GM10248 (cell line): ENCODE measurements at regions of chr13 and their contacts with region 1.

Region 1: GRCh38 chr13:27953676-27954405 is 15.3 kb downstream of the CDX2 start:
- DNase-seq: peak; percentile 89
- CTCF ChIP-seq: peak; percentile 97

Region 2: GRCh38 chr13:27556109-27556508 is 397.7 kb before region 1 on chr13:
- CTCF ChIA-PET with region 1: no interaction called
- POLR2A ChIA-PET with region 1: no interaction called
- DNase-seq: no peak
- CTCF ChIP-seq: peak; percentile 17

Region 3: GRCh38 chr13:27839809-27840467 is 113.9 kb before region 1 on chr13:
- CTCF ChIA-PET with region 1: interaction called, 10 read pairs
- POLR2A ChIA-PET with region 1: no interaction called
- DNase-seq: no peak
- CTCF ChIP-seq: no peak

Region 4: DNA sequence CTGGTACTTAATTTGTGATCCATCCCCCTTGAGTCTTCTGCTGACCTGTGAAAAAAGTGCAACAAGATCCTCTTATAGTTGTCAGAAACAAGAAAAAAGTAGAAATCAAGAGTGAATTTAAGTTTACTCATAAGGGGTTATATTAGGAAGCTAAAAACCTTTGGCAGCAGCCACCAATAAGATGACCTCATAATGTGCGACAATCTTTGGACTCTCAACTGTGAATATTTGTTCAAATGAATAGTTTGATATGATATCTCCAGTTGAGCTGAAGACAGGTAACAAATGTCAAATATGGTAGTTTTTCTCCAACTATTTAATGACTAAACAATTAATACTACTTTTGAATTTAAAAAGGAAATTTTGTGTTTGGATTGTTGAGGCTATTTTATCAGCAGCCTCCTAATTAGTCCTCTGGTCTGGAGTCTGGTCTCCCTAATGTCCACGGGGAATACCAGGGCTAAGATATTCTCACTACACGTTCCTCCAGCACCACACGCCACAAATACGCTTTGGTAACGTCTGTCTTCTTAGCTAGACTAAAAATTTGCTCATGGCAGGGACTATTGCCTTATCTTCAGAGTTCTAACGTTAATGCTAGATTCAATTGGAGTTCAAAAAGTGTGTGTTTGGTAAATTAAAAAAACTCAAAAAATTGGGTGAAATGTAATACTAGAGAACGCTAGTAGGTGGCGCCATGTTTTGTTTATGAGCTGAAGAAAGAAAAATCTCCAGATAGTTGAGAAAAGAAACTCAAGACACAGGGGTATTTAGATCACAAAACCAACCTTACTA is 85.0 kb before region 1 on chr13:
- CTCF ChIA-PET with region 1: interaction called, 40 read pairs
- POLR2A ChIA-PET with region 1: no interaction called
- DNase-seq: peak; percentile 33
- CTCF ChIP-seq: peak; percentile 28

Region 5: DNA sequence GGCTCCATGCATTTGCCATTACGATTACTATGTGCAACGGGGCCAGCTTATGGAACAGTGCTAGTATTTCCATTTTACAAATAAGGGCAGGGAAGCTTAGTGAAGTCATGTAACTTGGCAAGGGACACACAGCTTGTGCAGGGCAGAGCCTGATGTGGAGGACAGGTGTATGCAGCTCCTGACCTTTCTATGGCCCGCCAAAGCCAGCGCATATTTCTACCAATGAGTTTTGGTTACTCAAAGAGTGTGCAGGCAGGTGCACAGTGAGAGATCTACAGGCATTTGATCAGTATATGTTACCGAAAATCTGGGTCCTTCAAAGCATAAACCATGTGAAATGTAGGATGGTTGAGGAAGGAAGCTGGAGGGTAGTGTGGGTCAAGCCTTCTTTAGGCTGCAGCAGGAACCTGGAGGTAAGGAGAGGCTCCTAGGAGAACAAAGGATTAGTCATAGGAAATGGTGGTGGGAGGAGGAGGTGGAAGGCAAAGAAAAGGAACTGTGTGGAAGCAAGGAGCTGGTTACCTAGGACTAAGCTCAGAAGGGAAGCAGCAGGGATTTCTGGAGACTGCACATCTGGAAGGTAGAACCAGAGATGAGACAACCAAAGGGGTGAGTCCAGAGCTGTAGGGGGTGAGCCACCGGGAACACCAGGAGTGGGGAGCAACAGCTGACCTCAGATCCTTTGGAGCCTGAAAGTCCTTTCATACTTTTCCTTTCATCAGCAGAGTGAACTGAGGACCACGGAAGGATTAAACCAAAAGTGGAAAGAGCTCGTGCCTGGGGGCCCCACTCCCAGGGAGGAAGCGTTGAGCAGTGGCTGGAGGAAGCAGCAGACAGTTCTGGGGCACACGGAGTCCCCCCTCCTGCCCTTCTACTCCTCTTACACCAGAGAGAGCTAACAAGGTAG is 38.3 kb before region 1 on chr13:
- CTCF ChIA-PET with region 1: interaction called, 16 read pairs
- POLR2A ChIA-PET with region 1: no interaction called
- DNase-seq: no peak
- CTCF ChIP-seq: no peak

Region 6: GRCh38 chr13:27933580-27934328 is 20.1 kb before region 1 on chr13:
- CTCF ChIA-PET with region 1: interaction called, 12 read pairs
- POLR2A ChIA-PET with region 1: no interaction called
- DNase-seq: no peak
- CTCF ChIP-seq: no peak

Region 7: GRCh38 chr13:27968316-27969081 is 14.7 kb after region 1 on chr13:
- CTCF ChIA-PET with region 1: interaction called, 50 read pairs
- POLR2A ChIA-PET with region 1: no interaction called
- DNase-seq: peak; percentile 18
- CTCF ChIP-seq: no peak

Region 8: DNA sequence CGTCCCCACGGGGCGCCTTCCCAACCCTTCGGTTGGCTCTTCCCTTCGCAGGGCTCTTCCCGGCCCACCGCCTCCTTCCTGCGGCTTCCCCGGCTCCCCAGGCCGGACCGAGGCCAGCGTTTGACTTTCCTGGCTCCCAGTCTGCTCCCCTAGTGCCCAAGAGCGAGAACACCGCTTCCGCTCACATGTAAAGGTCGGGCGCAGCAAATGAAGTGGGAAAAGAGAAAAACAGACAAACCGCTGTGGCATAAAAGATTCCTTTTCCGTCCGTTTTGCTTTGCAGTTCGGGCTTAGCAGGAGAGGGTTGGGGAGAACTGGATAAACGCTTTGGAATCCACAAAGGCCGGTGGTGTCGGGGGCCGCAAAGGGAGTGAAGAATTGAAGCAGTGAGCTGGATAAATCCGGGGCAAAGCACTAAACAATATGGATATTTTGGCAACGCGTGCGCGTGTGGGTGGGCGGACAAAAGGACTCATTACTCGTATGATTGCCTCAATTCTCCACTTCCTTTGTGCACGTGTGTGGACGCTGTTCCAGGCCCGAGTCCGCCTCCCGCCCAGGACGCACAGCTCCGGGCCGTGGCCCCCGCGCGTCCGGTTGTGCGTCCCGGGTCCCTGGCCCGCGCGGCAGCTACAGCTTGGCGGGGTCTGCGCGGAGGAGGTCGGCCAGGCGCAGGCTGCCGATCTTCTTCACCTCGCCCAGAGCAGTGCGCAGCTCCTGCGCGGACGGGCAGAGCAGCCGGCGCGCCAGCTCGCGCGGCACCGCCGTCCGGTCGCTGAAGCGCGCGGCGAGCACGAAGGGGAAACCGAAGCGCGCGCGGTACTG is 23.8 kb after region 1 on chr13:
- CTCF ChIA-PET with region 1: interaction called, 50 read pairs
- POLR2A ChIA-PET with region 1: no interaction called
- DNase-seq: no peak
- CTCF ChIP-seq: no peak

Region 9: DNA sequence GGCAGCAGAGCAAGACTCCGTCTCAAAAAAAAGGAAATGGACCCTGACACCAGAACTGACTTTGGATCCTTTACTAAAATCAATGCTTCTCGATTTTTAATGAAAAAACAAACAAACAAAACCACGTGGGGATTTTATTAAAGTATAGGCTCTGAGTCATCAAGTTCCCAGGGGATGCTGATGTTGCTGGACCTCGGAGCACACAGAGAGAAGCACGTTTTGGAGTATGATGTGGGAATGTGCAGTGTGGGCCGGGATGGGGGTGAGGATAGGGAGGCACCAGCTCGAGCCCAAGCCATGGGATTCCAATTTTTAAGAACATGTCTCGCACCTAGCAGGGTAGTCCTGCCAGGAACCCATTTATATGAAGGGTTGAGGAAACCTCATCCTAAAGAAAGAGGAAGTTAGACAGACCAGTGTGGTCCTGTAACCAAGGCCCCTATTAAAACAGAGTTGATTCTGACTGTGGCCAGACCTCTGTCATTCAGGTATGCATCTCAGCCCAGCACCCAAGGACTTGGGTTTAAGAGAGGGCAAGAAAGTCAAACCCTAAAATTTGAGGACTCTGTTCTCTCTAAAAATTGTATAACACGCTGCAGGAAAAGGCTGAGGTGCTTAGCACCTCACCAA is 534.6 kb after region 1 on chr13:
- CTCF ChIA-PET with region 1: no interaction called
- POLR2A ChIA-PET with region 1: no interaction called
- DNase-seq: no peak
- CTCF ChIP-seq: no peak